HAP-1 (cell line): ENCODE measurements at regions of chr11 and their contacts with region 1.

Region 1: GRCh38 chr11:41175304-41175972 is 284.0 kb downstream of the LRRC4C start:
- DNase-seq: peak in 1 of 2 experiments; percentile 13
- H3K4me3 ChIP-seq: no peak overlapping the region
- H3K4me1 ChIP-seq: no peaks in the 10 kb centered on the region
- H3K27me3 ChIP-seq: no peaks in the 10 kb centered on the region

Region 2: GRCh38 chr11:40306938-40307548 is 868.4 kb before region 1 on chr11:
- in situ Hi-C with region 1: loop called (anchors 25 kb)
- DNase-seq: peak; percentile 23 to 33
- H3K4me3 ChIP-seq: no peak overlapping the region
- H3K4me1 ChIP-seq: no peaks in the 10 kb centered on the region
- H3K27me3 ChIP-seq: no peaks in the 10 kb centered on the region

Region 3: GRCh38 chr11:40679276-40679675 is 496.2 kb before region 1 on chr11:
- in situ Hi-C with region 1: no loop called
- DNase-seq: peak in 1 of 2 experiments; percentile 22
- H3K4me3 ChIP-seq: no peak overlapping the region
- H3K4me1 ChIP-seq: no peaks in the 10 kb centered on the region
- H3K27me3 ChIP-seq: no peaks in the 10 kb centered on the region

Region 4: GRCh38 chr11:41040474-41040873 is 135.0 kb before region 1 on chr11:
- in situ Hi-C with region 1: no loop called
- DNase-seq: no peak
- H3K4me3 ChIP-seq: no peak overlapping the region
- H3K4me1 ChIP-seq: peaks cover 25% of the 10 kb centered on the region
- H3K27me3 ChIP-seq: no peaks in the 10 kb centered on the region